ENCODE measurements at regions of chr16 and their contacts with region 1.

Region 1: GRCh38 chr16:74046527-74046926 is 250.1 kb upstream of the PSMD7 start:
- DNase-seq: no peak
- ATAC-seq: no peak
- H3K4me3 ChIP-seq: no peak overlapping the region
- H3K27ac ChIP-seq: no peak overlapping the region
- H3K4me1 ChIP-seq: no peaks in the 10 kb centered on the region
- H3K27me3 ChIP-seq: no peaks in the 10 kb centered on the region

Region 2: DNA sequence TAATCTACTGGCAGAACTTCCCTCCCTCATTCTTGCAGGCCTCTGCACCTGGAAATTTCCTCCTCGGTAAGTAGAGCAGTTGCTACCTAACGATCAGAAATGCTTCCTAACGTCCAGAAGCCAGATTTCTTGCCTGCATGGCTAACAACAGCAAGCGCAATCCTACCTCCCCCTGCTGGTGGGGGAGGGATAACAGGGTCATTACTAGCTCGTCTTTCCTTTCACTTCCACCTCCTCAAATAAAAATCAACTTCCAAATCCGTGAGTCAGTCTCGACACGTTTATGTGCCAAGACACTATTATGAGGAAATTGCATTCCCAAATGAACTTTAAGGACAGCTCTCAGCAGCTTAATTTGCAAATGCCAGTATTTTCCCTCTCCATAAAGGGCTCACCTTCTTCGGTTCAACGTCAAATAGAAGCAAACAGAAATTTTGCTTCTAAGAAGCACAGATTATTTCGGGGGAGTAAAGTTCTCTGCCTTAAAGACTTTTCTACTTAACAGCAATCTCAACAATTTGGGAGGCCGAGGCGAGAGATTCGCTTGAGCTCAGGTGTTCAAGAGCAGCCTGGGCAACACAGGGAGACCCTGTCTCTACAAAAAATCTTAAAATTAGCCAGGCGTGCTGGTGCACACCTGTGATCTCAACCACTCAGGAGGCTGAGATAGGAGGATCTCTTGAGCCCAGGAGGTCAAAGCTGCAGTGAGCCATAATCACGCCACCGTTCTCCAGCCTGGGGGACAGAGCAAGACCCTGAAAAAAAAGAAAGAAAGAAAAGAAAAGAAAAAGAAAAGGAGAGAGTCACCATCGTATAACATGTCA is 61.5 kb after region 1 on chr16:
- intact Hi-C with region 1: loop called in 1 of 2 experiments (anchors 10 kb)
- DNase-seq: peak in 1 of 2 donors; percentile 53
- ATAC-seq: peak; percentile 19
- H3K4me3 ChIP-seq: no peak overlapping the region
- H3K27ac ChIP-seq: no peak overlapping the region
- H3K4me1 ChIP-seq: no peaks in the 10 kb centered on the region
- H3K27me3 ChIP-seq: no peaks in the 10 kb centered on the region